Left ventricle myocardium superior (tissue), 1 donor: ENCODE measurements at regions of chr13 and their contacts with region 1.

Region 1: GRCh38 chr13:78978381-78978998 is 319.5 kb upstream of the OBI1 start:
- DNase-seq: no peak
- ATAC-seq: no peak

Region 2: DNA sequence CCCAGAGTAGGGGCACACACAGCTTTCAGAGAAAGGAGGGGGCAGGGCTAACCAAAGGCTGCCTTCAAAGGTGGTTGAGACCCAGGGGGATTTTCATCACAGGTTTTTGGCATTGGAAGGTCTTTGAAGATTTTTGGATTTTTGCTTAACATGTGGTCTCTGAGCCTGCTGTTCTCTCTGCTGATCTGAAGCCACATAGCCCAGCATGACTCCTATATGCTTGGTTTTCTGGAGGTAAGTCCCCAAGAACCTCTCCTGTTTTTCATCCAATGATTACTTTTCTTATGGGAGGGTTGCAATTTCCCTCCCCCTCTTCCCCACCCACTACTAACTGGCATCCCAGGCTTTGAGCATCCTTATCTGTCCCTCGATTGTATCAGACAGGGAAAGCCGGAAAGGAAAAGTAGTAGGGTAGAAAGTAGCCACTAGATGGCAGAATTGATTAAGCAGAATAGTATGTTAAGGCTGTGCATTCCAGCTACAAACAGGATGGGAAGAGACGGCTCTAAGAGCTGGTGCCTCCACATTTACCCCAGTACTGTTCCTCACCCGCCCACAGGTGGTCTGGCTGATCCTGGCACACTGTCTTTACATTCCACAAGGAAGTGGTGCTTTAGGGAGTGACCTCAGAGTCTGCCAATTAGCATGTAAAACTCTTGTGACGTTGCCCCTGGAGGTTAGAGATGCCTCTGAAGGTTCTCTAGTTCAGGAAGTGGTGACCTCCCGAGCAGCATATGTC is 840.9 kb before region 1 on chr13:
- intact Hi-C with region 1: loop called (anchors 5 kb)
- DNase-seq: no peak
- ATAC-seq: peak; percentile 70